H1 (cell line): ENCODE measurements at regions of chr21 and their contacts with region 1.

Region 1: GRCh38 chr21:27564684-27565301 is 597.9 kb upstream of the ADAMTS5 start:
- DNase-seq: peak in 1 of 2 experiments; percentile 7
- H3K4me3 ChIP-seq: no peak overlapping the region
- H3K27ac ChIP-seq: no peak overlapping the region
- H3K4me1 ChIP-seq: no peaks in the 10 kb centered on the region
- H3K27me3 ChIP-seq: no peaks in the 10 kb centered on the region
- CTCF ChIP-seq: peak in 2 of 3 experiments; percentile 65 to 66; a peak in 3 of 4 replicates
- EP300 ChIP-seq: no peak
- POLR2A ChIP-seq: no peak
- RAD21 ChIP-seq: peak; percentile 80 to 84

Region 2: DNA sequence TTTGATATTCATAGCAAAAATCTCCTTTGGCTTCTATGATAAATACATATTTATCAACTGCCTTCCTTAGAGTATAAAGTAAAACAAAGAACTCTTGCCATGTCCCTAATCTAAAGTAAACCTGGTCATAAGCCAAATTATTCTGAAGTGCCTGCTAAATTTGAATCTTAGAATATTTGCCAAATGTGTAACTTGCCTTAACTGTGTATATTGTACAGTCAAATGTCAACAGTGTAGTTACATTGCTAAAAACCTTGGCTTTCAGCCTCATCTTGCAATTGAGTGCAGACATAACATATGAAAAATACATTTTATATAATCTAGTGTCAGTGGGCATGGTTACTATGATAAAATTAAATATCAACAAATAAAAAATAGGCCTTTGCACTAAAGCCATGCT is 14.5 kb before region 1 on chr21:
- CTCF ChIA-PET with region 1: interaction called, 20 read pairs
- POLR2A ChIA-PET with region 1: no interaction called
- DNase-seq: no peak
- H3K4me3 ChIP-seq: no peak overlapping the region
- H3K27ac ChIP-seq: no peak overlapping the region
- H3K4me1 ChIP-seq: no peaks in the 10 kb centered on the region
- H3K27me3 ChIP-seq: no peaks in the 10 kb centered on the region
- CTCF ChIP-seq: no peak
- EP300 ChIP-seq: no peak
- POLR2A ChIP-seq: no peak
- RAD21 ChIP-seq: no peak

Region 3: DNA sequence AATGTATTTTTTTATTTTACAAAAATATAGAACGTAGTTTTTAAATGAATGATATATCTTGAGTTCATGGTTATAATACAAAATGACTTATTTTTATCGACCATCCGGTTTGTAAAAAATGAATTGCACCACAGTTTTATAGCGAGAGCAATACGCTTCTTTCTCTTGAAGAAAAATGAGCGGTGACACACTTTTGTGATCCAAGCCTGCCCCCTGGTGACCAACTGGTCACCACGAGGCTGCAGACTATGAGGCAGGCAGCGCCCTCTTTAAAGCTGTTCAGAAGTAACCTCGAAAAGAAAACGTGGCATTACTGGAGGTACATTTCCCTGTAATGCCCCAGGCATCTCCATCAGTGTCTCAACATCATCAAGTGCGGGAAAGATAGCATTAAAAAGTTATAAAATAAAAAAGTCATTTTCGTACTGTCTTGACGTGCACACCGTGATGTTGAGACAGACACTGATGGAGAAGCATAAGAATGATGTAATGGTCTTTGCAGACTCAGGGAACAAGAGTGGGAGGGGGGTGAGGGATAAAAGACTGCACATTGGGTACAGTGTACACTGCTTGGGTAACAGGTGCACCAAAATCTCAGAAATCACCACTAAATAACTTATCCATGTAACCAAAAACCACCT is 136.3 kb after region 1 on chr21:
- CTCF ChIA-PET with region 1: interaction called, 12 read pairs
- POLR2A ChIA-PET with region 1: no interaction called
- DNase-seq: peak; percentile 49 to 79
- H3K4me3 ChIP-seq: no peak overlapping the region
- H3K27ac ChIP-seq: no peak overlapping the region
- H3K4me1 ChIP-seq: no peaks in the 10 kb centered on the region
- H3K27me3 ChIP-seq: no peaks in the 10 kb centered on the region
- CTCF ChIP-seq: peak; percentile 78 to 96 (median 83)
- EP300 ChIP-seq: no peak
- POLR2A ChIP-seq: no peak
- RAD21 ChIP-seq: peak; percentile 95 to 96